ENCODE measurements at regions of chr2 and their contacts with region 1.

Region 1: GRCh38 chr2:42828487-42829425 is 36.4 kb upstream of the HAAO start:
- DNase-seq: peak; percentile 92
- H3K4me3 ChIP-seq: no peak overlapping the region; a peak in 1 of 4 replicates
- H3K27ac ChIP-seq: no peak overlapping the region
- H3K4me1 ChIP-seq: peaks cover 0 to 12% of the 10 kb centered on the region in 2 experiments; a peak in 1 of 4 replicates
- H3K27me3 ChIP-seq: no peaks in the 10 kb centered on the region
- CTCF ChIP-seq: peak; percentile 99
- EP300 ChIP-seq: no peak
- RAD21 ChIP-seq: peak; percentile 96

Region 2: DNA sequence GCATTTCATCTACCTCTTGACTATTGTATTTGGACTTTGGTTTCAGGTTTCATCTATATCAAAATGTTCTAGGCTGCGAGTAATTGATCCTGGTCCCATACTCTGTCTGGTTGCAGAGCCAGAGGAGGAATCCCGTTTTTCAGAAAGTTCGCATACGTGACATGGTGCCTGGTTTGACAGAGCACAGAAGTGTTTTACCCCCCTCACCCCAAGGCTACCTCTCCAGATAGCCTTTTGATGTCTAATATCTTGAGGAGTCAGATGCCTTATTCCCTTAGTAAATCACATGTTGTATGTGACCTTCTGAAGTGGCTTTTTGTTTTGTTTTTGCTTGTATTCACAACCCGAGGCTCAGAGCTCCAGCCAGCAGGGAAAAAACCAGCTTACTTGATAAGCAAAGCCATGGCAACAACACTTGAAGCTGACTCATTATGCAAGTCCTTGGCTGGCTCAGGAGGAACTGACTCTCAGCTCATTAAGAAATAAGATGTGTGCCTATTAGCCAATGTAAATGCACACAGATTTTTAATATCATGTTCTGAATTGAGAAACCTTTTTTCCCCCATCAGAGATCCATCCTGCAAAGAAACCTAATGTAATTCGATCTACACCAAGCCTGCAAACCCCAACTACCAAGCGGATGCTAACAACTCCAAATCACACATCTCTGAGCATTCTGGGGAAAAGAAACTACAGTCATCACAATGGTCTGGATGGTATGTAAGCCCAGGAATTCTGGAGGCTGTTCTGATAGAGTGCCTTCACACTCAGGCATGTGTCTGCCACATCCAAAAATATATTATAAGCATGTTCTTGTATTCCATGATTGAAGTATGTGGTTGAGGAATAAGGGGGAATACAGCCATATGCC is 106.2 kb before region 1 on chr2:
- CTCF ChIA-PET with region 1: no interaction called
- POLR2A ChIA-PET with region 1: no interaction called
- DNase-seq: no peak
- H3K4me3 ChIP-seq: no peak overlapping the region
- H3K27ac ChIP-seq: peak overlapping the region in 1 of 2 experiments; percentile 42; a peak in 2 of 4 replicates
- H3K4me1 ChIP-seq: no peaks in the 10 kb centered on the region
- H3K27me3 ChIP-seq: no peaks in the 10 kb centered on the region
- CTCF ChIP-seq: no peak
- EP300 ChIP-seq: no peak
- RAD21 ChIP-seq: no peak

Region 3: GRCh38 chr2:42859006-42859552 is 30.3 kb after region 1 on chr2:
- CTCF ChIA-PET with region 1: interaction called, 53 read pairs
- POLR2A ChIA-PET with region 1: no interaction called
- DNase-seq: peak; percentile 86
- H3K4me3 ChIP-seq: no peak overlapping the region
- H3K27ac ChIP-seq: no peak overlapping the region
- H3K4me1 ChIP-seq: peaks cover 0 to 22% of the 10 kb centered on the region in 2 experiments; a peak in 1 of 4 replicates
- H3K27me3 ChIP-seq: no peaks in the 10 kb centered on the region
- CTCF ChIP-seq: peak; percentile 98
- EP300 ChIP-seq: no peak
- RAD21 ChIP-seq: peak; percentile 98

Region 4: DNA sequence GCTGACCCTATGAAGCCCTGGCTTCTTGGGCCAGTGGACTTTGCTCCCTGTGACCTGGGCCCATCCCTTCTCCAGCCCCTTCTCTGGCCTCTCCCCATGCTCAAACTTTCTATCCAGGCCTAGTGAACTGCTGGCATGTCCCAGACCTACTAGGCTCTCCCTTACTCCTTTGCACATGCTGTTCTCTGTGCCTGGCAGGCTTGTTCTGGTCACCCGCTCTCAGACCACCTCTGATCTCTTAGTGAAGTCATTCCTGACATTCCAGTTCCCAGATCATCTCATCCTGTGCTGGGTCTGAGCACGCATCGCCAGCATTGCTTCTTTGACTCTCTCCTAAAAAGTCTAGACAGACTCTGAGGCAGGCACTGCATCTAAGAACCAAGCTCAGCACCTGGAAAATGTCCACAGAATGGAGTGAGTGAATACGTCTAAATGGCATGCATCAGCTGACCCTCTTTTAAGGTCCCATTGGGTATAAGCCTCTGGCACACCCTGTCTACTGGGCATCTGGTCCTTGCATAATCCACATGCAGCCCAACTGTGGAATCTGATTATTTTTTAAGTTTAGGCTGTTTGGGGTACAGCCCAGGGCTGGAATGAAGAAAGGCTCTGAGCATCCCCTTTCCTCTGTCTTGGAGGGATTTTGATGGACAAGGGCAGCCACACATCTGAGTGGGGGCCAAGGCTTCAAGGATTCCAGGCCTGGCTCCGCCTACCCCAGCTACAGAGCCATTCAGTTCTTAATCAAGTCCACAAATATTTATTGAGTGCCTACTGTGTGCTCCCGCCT is 94.2 kb after region 1 on chr2:
- CTCF ChIA-PET with region 1: interaction called, 56 read pairs
- POLR2A ChIA-PET with region 1: no interaction called
- DNase-seq: no peak
- H3K4me3 ChIP-seq: no peak overlapping the region
- H3K27ac ChIP-seq: peak overlapping the region; percentile 7 to 93; a peak in 3 of 4 replicates
- H3K4me1 ChIP-seq: peaks cover 39 to 48% of the 10 kb centered on the region in 2 experiments
- H3K27me3 ChIP-seq: no peaks in the 10 kb centered on the region
- CTCF ChIP-seq: no peak
- EP300 ChIP-seq: no peak
- RAD21 ChIP-seq: no peak

Region 5: DNA sequence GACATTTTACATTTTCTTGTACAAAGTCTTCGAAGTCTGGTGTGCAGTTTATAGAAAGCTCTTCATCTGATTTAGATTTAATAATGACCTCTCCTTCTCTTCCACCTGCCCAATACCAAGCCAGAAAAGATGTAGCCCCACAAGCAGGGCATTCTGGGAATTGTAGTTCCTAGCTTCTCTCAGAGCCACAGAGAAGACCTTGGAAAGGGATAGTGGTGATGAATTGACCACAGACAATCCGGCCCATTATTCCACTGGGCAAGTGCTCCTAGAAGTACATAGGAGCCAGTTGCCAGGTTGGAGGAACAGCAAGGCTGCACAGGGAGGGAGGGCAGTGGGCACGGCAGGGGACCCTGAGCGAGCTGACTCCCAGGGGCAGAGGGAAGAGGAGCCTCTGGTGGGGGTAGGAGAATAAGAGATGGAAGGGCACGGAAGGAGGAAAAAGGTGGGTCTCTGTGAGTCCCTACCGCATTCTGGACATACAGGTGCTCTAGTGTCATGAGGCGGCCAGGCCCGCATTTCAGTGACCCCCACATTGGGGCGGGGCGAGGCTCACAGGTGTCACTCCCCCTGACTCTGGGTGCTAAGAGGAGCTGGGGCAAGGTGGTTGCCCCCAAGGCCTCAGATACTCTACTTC is 116.1 kb after region 1 on chr2:
- CTCF ChIA-PET with region 1: interaction called, 60 read pairs
- POLR2A ChIA-PET with region 1: no interaction called
- DNase-seq: peak; percentile 56
- H3K4me3 ChIP-seq: no peak overlapping the region
- H3K27ac ChIP-seq: no peak overlapping the region
- H3K4me1 ChIP-seq: peaks cover 1 to 3% of the 10 kb centered on the region in 2 experiments; a peak in 2 of 4 replicates
- H3K27me3 ChIP-seq: no peaks in the 10 kb centered on the region
- CTCF ChIP-seq: no peak
- EP300 ChIP-seq: no peak
- RAD21 ChIP-seq: no peak

Region 6: DNA sequence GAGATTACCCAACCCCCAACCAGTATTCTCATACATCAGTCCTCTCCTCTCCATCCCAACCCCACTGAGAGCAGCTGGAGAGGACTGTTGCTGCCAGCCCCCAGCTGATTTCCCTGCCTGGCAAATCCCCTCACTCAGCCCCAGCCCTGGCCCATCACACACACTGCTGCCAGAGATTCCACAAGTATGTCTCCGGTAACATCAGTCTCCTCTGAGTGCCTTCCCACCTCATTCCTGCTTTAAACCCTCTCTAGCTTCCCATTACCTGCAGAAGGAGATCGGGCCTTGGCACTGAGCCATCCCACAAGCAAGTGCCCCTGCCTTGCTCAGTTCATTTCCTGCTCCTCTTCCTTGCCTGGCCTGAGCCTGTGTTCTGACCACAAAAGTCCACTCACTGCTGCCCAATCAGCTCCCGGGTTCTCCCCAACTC is 448.2 kb after region 1 on chr2:
- CTCF ChIA-PET with region 1: no interaction called
- POLR2A ChIA-PET with region 1: no interaction called
- DNase-seq: peak; percentile 56
- H3K4me3 ChIP-seq: no peak overlapping the region
- H3K27ac ChIP-seq: peak overlapping the region; percentile 42 to 95; a peak in 3 of 4 replicates
- H3K4me1 ChIP-seq: peaks cover 39 to 58% of the 10 kb centered on the region in 2 experiments
- H3K27me3 ChIP-seq: no peaks in the 10 kb centered on the region
- CTCF ChIP-seq: no peak
- EP300 ChIP-seq: no peak; a peak in 1 of 4 replicates
- RAD21 ChIP-seq: no peak

Region 7: GRCh38 chr2:43542285-43542937 is 713.7 kb after region 1 on chr2:
- CTCF ChIA-PET with region 1: interaction called, 80 read pairs
- POLR2A ChIA-PET with region 1: no interaction called
- DNase-seq: peak; percentile 52
- H3K4me3 ChIP-seq: no peak overlapping the region
- H3K27ac ChIP-seq: peak overlapping the region in 1 of 2 experiments; percentile 28; a peak in 1 of 4 replicates
- H3K4me1 ChIP-seq: peaks cover 8 to 13% of the 10 kb centered on the region in 2 experiments
- H3K27me3 ChIP-seq: no peaks in the 10 kb centered on the region
- CTCF ChIP-seq: peak; percentile 78
- EP300 ChIP-seq: no peak
- RAD21 ChIP-seq: peak; percentile 81

Region 8: GRCh38 chr2:43576981-43577892 is 748.5 kb after region 1 on chr2:
- CTCF ChIA-PET with region 1: interaction called, 38 read pairs
- POLR2A ChIA-PET with region 1: no interaction called
- DNase-seq: peak; percentile 49
- H3K4me3 ChIP-seq: no peak overlapping the region
- H3K27ac ChIP-seq: peak overlapping the region in 1 of 2 experiments; percentile 57; a peak in 1 of 4 replicates
- H3K4me1 ChIP-seq: no peaks in the 10 kb centered on the region
- H3K27me3 ChIP-seq: no peaks in the 10 kb centered on the region
- CTCF ChIP-seq: peak; percentile 99
- EP300 ChIP-seq: no peak
- RAD21 ChIP-seq: peak; percentile 68

Region 9: GRCh38 chr2:43611987-43612894 is 783.5 kb after region 1 on chr2:
- CTCF ChIA-PET with region 1: interaction called, 34 read pairs
- POLR2A ChIA-PET with region 1: no interaction called
- DNase-seq: peak; percentile 82
- H3K4me3 ChIP-seq: no peak overlapping the region; a peak in 1 of 4 replicates
- H3K27ac ChIP-seq: no peak overlapping the region
- H3K4me1 ChIP-seq: no peaks in the 10 kb centered on the region
- H3K27me3 ChIP-seq: no peaks in the 10 kb centered on the region
- CTCF ChIP-seq: peak; percentile 97
- EP300 ChIP-seq: no peak
- RAD21 ChIP-seq: peak; percentile 90